ENCODE measurements at regions of chr3 and their contacts with region 1.

Region 1: DNA sequence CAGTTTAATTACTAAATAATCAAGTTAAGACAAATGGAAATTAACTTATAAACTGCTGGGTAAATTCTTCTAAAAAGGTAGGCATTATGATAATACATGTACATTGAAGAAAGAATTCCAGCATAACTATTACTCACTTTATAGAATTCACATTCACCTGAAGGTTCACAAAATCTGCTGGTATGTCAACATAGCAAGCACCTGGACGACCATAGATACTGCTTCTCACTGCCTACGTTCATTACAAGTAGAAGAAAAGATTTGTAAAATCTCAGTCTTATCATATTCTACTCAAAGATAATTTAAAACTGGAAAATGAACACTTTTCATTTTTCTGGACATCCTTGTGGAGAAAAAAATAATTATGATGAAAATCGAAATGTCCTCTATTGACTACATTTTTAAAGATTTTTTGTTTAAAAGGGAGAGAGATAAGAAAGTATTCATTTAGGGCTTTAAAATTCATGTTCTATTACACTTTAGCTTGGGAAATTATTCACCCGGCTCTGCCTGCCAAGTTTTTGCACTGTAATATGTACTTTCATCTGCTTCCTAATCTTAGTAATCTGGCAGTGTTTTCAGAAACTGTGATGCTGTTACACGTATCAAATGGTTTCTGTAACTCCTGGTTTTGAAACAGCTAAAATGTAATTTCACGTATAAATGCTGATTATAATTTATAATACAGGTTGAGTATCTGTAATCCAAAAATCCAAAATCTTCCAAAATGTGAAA is 16.1 kb downstream of the HACL1 start:
- DNase-seq: no peak
- ATAC-seq: no peak
- H3K4me3 ChIP-seq: no peak overlapping the region
- H3K4me3 Mint-ChIP-seq: no peak overlapping the region
- H3K27ac ChIP-seq: no peak overlapping the region
- H3K27ac Mint-ChIP-seq: no peak overlapping the region
- H3K4me1 ChIP-seq: no peaks in the 10 kb centered on the region
- H3K4me1 Mint-ChIP-seq: no peaks in the 10 kb centered on the region
- H3K27me3 ChIP-seq: no peaks in the 10 kb centered on the region
- H3K27me3 Mint-ChIP-seq: no peaks in the 10 kb centered on the region
- CTCF ChIP-seq: no peak

Region 2: DNA sequence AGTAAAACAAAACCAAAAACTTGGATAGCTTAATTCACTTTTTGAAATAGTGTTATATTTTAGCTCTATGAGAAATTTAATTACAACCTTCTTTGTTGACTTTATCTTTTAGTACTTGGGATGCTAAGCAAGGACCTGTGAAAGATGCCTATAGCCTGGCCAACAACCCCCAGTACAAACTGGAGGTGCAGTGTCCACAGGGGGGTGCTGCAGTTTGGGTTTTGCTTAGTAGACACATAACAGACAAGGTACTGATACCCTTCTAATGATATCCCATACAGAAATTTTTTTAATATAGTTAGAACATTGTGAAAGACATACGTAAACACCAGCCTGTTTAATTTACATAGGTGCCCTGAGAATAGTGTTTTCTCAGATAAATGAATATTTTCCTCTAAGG is 343.9 kb before region 1 on chr3:
- CTCF ChIA-PET with region 1: no interaction called
- POLR2A ChIA-PET with region 1: no interaction called
- intact Hi-C with region 1: loop called in 1 of 2 experiments (anchors 10 kb)
- DNase-seq: peak in 6 of 9 experiments; percentile 15 to 68 (median 44)
- ATAC-seq: peak; percentile 62
- H3K4me3 ChIP-seq: no peak overlapping the region
- H3K4me3 Mint-ChIP-seq: no peak overlapping the region
- H3K27ac ChIP-seq: no peak overlapping the region
- H3K27ac Mint-ChIP-seq: no peak overlapping the region
- H3K4me1 ChIP-seq: no peaks in the 10 kb centered on the region
- H3K4me1 Mint-ChIP-seq: no peaks in the 10 kb centered on the region
- H3K27me3 ChIP-seq: no peaks in the 10 kb centered on the region
- H3K27me3 Mint-ChIP-seq: no peaks in the 10 kb centered on the region
- CTCF ChIP-seq: no peak

Region 3: GRCh38 chr3:16433701-16434151 is 848.4 kb after region 1 on chr3:
- CTCF ChIA-PET with region 1: no interaction called
- POLR2A ChIA-PET with region 1: no interaction called
- intact Hi-C with region 1: no loop called
- DNase-seq: peak in 1 of 9 experiments; percentile 12
- ATAC-seq: no peak
- H3K4me3 ChIP-seq: no peak overlapping the region
- H3K4me3 Mint-ChIP-seq: no peak overlapping the region
- H3K27ac ChIP-seq: no peak overlapping the region
- H3K27ac Mint-ChIP-seq: no peak overlapping the region
- H3K4me1 ChIP-seq: no peaks in the 10 kb centered on the region
- H3K4me1 Mint-ChIP-seq: peaks cover 22% of the 10 kb centered on the region
- H3K27me3 ChIP-seq: no peaks in the 10 kb centered on the region
- H3K27me3 Mint-ChIP-seq: no peaks in the 10 kb centered on the region
- CTCF ChIP-seq: no peak

Region 4: GRCh38 chr3:16622932-16623331 is 1037.7 kb after region 1 on chr3:
- CTCF ChIA-PET with region 1: no interaction called
- POLR2A ChIA-PET with region 1: no interaction called
- intact Hi-C with region 1: no loop called
- DNase-seq: no peak
- ATAC-seq: no peak
- H3K4me3 ChIP-seq: no peak overlapping the region
- H3K4me3 Mint-ChIP-seq: no peak overlapping the region
- H3K27ac ChIP-seq: no peak overlapping the region
- H3K27ac Mint-ChIP-seq: no peak overlapping the region
- H3K4me1 ChIP-seq: no peaks in the 10 kb centered on the region
- H3K4me1 Mint-ChIP-seq: no peaks in the 10 kb centered on the region
- H3K27me3 ChIP-seq: no peaks in the 10 kb centered on the region
- H3K27me3 Mint-ChIP-seq: peaks cover 2% of the 10 kb centered on the region
- CTCF ChIP-seq: no peak